Right ventricle myocardium inferior (tissue), 1 donor: ENCODE measurements at regions of chr10 and their contacts with region 1.

Region 1: GRCh38 chr10:13891128-13892000 is 304.6 kb downstream of the PRPF18 start:
- DNase-seq: no peak
- ATAC-seq: peak; percentile 60

Region 2: GRCh38 chr10:13120786-13121499 is 770.4 kb before region 1 on chr10:
- intact Hi-C with region 1: no loop called
- DNase-seq: no peak
- ATAC-seq: peak; percentile 82

Region 3: DNA sequence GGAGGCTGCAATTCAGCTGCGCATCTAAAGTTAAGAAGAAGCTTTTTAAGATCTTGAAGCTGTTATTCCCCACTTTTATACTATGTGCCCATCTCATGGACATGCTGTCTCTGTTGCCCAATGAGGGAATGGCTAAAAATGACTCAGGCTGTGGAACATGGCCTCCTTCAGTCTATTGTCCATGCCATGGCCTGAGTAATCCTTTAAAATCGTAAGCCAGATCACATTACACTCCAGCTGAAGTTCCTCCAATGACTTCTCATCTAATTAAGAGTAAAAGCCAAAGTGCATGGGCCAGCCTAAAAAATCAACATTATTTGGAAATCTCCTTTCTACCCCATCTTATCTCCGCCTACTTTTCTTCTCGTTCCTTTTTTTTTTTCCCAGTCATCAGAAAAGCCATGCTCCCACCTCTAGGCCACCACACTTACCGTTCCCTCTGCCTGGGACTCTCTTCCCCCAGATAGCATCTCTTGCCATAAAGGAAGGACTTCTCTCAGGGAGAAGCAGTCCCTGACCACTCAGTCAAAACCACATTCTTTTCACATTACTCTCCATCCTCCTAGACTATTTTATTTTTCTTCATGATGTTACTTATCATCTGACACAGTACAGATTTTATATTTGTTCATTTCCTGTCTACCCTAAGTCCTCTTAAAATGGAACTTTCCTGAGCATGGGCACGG is 32.8 kb after region 1 on chr10:
- intact Hi-C with region 1: loop called (anchors 1 kb)
- DNase-seq: no peak
- ATAC-seq: peak; percentile 72

Region 4: DNA sequence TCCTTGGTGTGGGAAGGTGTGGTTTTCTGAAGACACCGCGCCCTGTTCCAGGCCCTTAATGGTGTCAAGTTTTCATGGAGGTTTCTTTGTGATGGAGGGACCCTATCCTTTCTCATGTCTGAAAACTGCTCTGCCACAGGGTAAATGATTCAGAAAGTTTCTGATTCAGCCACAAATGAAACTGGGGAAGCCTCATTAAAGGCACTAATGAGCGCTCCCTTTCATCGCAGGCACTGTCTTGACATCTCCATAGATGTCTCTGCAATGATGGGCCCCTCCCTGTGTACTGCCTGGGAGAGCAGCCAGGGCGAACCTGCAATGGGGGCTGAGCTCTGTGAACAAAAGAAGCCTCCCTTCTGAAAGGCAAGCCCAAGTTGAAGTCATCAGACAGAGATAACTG is 50.7 kb after region 1 on chr10:
- intact Hi-C with region 1: loop called (anchors 5 kb)
- DNase-seq: no peak
- ATAC-seq: no peak

Region 5: DNA sequence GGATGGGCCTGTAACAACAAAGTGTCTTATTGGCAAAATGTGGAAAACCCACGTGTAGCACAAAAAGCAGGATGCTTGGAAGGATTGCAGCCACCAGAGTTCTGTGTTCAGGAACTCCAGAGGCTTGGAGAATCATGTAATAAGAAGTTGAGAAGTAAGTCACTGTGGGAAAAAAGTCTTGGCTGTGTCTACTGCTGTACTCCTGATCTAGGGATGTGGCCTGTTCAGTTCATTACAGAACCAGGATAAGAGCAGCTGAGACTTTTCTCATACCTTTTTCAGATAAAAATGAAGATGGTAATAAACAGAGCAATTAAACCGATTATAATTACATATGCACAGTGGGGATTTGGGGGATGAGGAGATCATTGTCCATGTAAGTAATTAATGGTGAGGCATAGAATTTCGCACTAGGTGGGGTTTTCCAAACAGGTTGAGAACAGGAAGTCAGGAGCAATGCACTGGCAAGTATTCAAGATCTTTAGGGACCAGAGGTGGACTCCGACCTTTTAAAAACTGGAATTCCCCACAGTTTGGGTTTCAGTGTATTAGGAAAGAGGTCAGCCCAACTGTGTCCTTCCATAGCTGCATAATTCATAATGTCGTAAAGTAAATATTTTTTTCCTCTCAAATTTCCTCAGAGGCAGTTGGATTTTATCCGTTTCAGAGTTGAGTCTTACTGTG is 157.7 kb after region 1 on chr10:
- intact Hi-C with region 1: no loop called
- DNase-seq: no peak
- ATAC-seq: no peak

Region 6: DNA sequence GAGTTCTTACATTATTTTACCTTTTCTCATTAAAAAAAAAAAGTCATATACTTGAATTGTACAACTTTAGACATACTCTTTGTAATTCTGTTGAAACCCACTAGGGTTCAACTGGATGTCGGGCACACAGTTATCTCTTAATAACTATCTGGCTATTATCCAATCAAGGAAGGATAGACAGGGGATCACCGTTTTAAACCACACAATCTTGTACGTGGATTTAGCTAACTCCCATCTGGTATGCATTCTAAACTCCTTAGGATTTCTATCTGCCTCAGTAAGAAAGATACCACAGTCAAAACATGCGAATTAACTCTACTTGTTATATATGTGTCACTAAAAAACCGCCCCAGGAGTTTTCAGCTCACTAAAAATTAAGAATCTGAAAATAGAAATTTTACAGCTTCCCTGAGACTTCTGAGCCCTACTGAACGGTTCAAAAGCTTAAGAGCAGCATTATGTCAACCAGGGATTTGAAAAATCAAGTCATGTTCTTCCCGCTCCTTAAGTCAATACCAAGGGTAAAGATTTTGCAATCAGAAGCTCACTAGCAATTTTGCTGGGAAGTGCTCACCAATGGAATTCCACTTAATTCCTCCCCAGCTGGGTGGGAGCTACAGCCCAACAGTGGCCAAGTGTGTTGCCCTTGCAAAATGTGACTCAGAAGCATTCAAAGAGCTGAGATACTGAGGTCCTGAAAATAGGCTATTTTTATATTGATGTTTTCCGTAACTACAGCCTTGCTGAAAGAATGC is 172.3 kb after region 1 on chr10:
- intact Hi-C with region 1: no loop called
- DNase-seq: no peak
- ATAC-seq: peak; percentile 85

Region 7: DNA sequence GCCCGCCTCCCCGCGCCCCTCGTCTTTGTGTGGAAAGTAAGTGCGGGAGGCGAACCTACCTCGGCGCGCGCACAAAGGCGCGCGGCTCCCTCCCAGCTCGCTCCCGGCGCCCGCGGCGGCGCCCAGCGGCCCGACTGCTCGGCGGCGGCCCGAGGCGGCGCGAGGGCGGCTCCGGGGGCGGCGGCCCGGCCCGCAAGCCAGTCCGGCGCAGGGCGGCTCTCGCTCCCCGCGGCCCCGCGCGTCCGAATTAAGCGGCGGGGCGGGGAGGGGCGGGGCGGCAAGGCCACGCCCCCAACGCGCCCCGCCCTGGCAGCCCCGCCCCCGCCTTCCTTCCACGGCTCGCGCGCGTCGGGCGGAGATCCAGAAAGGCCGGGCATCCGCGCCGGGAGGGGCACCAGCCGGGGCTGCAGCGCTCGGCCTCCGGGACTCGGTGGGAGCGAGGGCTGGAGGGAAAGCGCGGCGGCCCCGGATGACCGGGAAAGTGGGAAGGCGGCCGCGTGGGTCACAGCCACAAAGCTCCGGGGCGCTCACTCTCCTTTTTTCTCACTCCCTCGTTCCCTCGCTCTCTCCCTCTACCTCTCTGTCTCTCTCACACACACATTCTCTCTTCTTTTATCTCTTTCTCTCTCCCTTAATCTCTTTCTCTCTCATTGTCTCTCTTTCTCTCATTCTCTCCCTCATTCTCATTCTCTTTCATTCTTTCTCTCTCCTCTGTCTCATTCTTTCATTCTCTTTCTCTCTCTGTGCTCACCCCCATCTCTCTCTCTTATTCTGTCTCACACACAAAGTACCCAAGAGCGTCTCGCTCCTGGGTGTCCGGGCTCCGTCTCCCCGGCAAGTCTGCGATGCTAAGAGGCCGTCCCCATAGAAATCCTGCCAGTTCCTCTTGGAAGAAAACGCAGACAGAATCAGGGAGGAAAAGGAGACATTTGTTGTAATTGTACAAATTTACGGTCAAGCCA is 713.1 kb after region 1 on chr10:
- intact Hi-C with region 1: no loop called
- DNase-seq: peak; percentile 93
- ATAC-seq: peak; percentile 98